Mammary epithelial cell (primary cell): ENCODE measurements at regions of chr16 and their contacts with region 1.

Region 1: DNA sequence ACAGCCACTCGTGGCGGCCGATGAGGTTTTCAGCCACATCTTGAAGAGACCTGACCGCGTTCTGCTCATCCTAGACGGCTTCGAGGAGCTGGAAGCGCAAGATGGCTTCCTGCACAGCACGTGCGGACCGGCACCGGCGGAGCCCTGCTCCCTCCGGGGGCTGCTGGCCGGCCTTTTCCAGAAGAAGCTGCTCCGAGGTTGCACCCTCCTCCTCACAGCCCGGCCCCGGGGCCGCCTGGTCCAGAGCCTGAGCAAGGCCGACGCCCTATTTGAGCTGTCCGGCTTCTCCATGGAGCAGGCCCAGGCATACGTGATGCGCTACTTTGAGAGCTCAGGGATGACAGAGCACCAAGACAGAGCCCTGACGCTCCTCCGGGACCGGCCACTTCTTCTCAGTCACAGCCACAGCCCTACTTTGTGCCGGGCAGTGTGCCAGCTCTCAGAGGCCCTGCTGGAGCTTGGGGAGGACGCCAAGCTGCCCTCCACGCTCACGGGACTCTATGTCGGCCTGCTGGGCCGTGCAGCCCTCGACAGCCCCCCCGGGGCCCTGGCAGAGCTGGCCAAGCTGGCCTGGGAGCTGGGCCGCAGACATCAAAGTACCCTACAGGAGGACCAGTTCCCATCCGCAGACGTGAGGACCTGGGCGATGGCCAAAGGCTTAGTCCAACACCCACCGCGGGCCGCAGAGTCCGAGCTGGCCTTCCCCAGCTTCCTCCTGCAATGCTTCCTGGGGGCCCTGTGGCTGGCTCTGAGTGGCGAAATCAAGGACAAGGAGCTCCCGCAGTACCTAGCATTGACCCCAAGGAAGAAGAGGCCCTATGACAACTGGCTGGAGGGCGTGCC is 30.1 kb downstream of the CIITA start:
- DNase-seq: no peak
- H3K4me3 ChIP-seq: no peak overlapping the region
- H3K27ac ChIP-seq: no peak overlapping the region
- H3K4me1 ChIP-seq: no peaks in the 10 kb centered on the region
- H3K27me3 ChIP-seq: peaks cover 2% of the 10 kb centered on the region
- CTCF ChIP-seq: no peak

Region 2: DNA sequence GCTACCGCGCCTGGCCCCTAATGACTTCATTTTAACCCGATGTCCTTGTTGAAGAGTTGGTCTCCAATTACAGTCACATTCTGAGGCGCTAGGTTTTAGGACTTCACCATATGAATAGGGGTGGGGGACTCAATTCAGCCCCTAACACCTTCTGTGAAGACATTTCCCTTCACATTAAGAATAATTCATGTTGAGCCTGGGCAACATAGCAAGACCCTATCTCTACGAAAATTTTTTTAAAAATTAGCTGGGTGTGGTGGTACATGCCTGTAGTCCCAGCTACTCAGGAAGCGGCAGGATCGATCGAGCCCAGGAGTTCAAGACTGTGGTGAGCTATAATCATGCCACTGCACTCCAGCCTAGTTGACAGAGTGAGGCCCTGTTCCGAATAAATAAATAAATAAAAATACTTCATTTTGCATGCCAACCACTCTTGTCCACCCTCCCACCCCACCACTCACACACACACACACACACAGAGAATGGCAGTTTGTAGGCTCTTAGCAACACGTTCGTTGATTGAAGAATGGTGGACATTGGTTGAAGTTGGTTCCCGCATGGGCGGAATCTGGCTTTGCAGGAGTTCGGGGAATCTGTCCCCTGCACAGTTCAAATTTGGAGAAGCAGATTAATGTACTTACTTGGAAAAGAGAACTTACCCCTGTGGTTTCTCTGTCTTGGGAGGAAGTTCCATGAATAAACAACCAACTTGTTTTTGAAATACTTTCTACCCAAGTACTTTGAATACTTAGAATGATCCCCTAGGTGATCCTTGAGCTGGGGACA is 60.7 kb before region 1 on chr16:
- CTCF ChIA-PET with region 1: no interaction called
- dilution Hi-C with region 1: loop called (anchors 10 kb)
- in situ Hi-C with region 1: no loop called
- intact Hi-C with region 1: no loop called
- DNase-seq: no peak
- H3K4me3 ChIP-seq: no peak overlapping the region
- H3K27ac ChIP-seq: no peak overlapping the region
- H3K4me1 ChIP-seq: peaks cover 10% of the 10 kb centered on the region
- H3K27me3 ChIP-seq: no peaks in the 10 kb centered on the region
- CTCF ChIP-seq: no peak

Region 3: GRCh38 chr16:10988164-10988803 is 81.1 kb after region 1 on chr16:
- CTCF ChIA-PET with region 1: no interaction called
- dilution Hi-C with region 1: no loop called
- in situ Hi-C with region 1: no loop called
- intact Hi-C with region 1: no loop called
- DNase-seq: no peak
- H3K4me3 ChIP-seq: no peak overlapping the region
- H3K27ac ChIP-seq: no peak overlapping the region
- H3K4me1 ChIP-seq: peaks cover 40% of the 10 kb centered on the region
- H3K27me3 ChIP-seq: no peaks in the 10 kb centered on the region
- CTCF ChIP-seq: peak; percentile 26 to 51